Left ventricle myocardium superior (tissue), 1 donor: ENCODE measurements at regions of chr4 and their contacts with region 1.

Region 1: GRCh38 chr4:103046416-103047290 is 27.1 kb upstream of the SLC9B1 start:
- DNase-seq: no peak
- ATAC-seq: peak; percentile 78

Region 2: DNA sequence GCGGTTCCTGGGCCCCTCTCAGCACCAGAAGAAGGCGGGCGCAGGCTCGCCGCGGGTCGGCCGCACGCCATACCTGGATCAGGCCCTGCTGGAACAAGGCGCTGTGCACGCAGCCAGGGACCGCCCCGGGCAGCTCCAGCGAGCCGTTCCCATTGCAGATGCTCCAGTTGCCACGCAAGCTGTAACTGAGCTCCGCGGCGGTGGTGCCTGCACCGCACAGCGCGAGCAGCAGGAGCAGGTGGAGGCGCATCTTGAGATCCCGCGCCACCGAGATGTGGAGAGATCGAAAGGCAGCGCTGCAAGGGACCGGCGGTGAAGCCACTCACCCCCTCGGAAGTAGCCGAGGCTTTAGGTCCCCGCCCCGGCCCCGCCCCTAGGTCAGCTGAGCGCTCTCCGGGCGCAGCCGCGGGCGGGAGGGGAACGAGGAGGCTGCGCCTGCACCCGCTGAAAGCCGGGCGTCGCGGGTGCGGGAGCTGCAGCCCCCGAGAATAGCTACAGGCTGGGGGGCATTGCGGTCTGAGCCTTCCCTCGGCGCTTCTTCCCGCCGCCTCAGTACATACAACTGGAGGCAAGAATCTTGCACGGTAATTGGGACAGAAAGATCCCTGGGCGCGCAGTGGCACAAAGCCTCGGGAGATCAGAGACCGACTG is 285.9 kb before region 1 on chr4 and contains the start of gene MANBA:
- intact Hi-C with region 1: no loop called
- DNase-seq: peak; percentile 91
- ATAC-seq: peak; percentile 99
- total RNA-seq, gene MANBA: 27.3 TPM

Region 3: GRCh38 chr4:102994803-102995202 is 51.9 kb before region 1 on chr4:
- intact Hi-C with region 1: no loop called
- DNase-seq: no peak
- ATAC-seq: no peak

Region 4: GRCh38 chr4:103099691-103100392 is 53.2 kb after region 1 on chr4 and contains the start of gene BDH2:
- intact Hi-C with region 1: loop called (anchors 10 kb)
- DNase-seq: no peak
- ATAC-seq: peak; percentile 97
- total RNA-seq, gene BDH2: 25.6 TPM